ENCODE measurements at regions of chr2 and their contacts with region 1.

Region 1: DNA sequence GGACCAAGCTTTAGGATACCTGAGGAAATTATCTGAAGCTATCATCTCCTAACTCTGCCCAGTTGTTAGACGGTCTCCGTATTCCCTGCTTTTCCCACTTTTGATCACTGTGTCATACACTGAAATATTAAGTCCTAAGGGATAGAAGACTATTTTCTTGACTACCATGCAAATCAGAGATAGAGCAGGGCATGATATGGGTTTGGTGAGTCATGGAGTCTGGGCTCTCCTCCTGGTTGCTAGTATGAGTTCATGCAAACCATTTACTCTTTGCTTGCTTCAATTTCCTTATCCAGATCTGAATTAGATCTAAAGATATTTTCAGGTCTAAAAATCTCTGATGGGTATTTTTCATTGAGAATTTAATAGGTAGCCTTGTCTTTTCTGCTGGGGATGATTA is 55.0 kb downstream of the EHBP1 start:
- DNase-seq: peak; percentile 78
- ATAC-seq: peak; percentile 86
- H3K4me3 ChIP-seq: no peak overlapping the region
- H3K27ac ChIP-seq: no peak overlapping the region
- H3K4me1 ChIP-seq: peaks cover 2% of the 10 kb centered on the region; the same call in 1 of the 2 replicates
- H3K27me3 ChIP-seq: no peaks in the 10 kb centered on the region
- CTCF ChIP-seq: no peak
- POLR2A ChIP-seq: no peak
- RAD21 ChIP-seq: no peak

Region 2: GRCh38 chr2:62745891-62746481 is 14.6 kb before region 1 on chr2:
- CTCF ChIA-PET with region 1: no interaction called
- POLR2A ChIA-PET with region 1: no interaction called
- dilution Hi-C with region 1: no loop called
- in situ Hi-C with region 1: no loop called
- intact Hi-C with region 1: loop called (anchors 2 kb)
- DNase-seq: no peak
- ATAC-seq: no peak
- H3K4me3 ChIP-seq: no peak overlapping the region
- H3K27ac ChIP-seq: no peak overlapping the region
- H3K4me1 ChIP-seq: no peaks in the 10 kb centered on the region; the same call in 1 of the 2 replicates
- H3K27me3 ChIP-seq: no peaks in the 10 kb centered on the region
- CTCF ChIP-seq: no peak
- POLR2A ChIP-seq: no peak
- RAD21 ChIP-seq: no peak

Measured in IMR-90 (cell line).